Activated naive CD4-positive, alpha-beta T cell treated with anti-CD3 and anti-CD28 coated beads for 36 hours (primary cell): ENCODE measurements at regions of chr4 and their contacts with region 1.

Region 1: GRCh38 chr4:159446266-159446976 is 343.5 kb downstream of the RAPGEF2 start:
- DNase-seq: peak; percentile 42
- H3K4me3 Mint-ChIP-seq: no peak overlapping the region
- H3K27ac Mint-ChIP-seq: no peak overlapping the region
- H3K4me1 Mint-ChIP-seq: no peaks in the 10 kb centered on the region
- H3K27me3 Mint-ChIP-seq: peaks cover 17% of the 10 kb centered on the region

Region 2: DNA sequence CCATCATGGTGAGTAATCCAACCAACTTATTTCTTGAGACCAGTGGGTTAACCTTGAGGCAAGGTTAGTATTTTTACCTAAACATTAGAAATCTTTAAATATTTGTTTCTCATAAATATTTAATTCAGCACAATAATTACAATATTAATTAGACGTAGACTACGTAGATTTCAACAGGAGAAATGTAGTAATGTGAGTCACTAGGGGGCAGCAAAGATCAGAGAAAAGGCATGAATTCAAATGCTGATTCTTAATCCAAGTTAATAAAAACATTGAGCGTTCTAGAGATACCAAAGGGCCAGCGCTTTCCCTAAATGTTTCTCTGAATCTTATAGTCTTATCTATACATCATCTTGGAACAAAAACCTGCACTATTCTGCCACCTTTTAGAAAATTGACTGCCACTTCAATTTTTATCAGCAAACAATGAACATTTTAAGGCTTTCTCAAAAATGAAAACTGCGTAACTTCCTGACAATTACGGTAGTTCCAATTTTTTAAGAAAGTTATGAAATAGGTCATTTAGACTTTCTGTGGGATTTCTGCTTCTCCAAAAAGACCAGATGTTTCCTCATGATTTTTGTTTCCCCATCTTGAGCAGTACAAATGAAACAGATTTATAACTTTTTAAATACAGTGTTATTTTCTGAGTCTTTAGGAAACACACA is 1454.2 kb before region 1 on chr4:
- CTCF ChIA-PET with region 1: no interaction called
- intact Hi-C with region 1: loop called (anchors 5 kb)
- DNase-seq: peak; percentile 32
- H3K4me3 Mint-ChIP-seq: no peak overlapping the region
- H3K27ac Mint-ChIP-seq: no peak overlapping the region
- H3K4me1 Mint-ChIP-seq: no peaks in the 10 kb centered on the region
- H3K27me3 Mint-ChIP-seq: no peaks in the 10 kb centered on the region

Region 3: DNA sequence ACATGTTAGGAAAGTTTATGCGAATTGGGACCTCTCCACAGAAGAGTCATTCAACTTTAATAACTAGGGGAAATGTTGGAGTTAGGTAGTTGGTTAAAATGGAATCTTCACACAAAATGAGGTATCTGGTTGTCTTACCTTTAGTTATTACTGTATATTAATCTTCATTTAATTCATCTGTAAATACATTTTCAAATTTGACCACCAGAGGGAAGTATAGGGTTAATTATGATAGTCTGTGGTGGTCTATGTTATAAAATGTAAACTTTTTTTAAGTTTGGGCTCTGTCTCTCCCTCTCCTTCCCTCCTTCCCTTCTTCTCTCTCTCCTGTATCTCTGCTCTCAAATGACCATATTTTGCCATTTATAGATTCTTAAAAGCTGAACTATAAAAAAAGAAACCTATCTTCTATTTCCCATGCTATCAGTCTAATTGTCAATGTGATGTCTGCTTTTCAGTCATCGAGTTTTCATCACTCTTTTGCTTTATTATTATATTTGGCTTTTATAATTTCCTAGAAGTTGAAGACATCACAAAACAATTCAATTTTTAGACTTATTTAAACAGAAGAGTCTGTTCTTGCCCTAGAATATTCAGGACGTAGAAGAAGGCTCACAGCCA is 1186.4 kb before region 1 on chr4:
- CTCF ChIA-PET with region 1: interaction called, 3 read pairs
- intact Hi-C with region 1: loop called (anchors 1 kb)
- DNase-seq: no peak
- H3K4me3 Mint-ChIP-seq: no peak overlapping the region
- H3K27ac Mint-ChIP-seq: no peak overlapping the region
- H3K4me1 Mint-ChIP-seq: no peaks in the 10 kb centered on the region
- H3K27me3 Mint-ChIP-seq: no peaks in the 10 kb centered on the region

Region 4: GRCh38 chr4:158496030-158496741 is 950.2 kb before region 1 on chr4:
- CTCF ChIA-PET with region 1: no interaction called
- intact Hi-C with region 1: loop called (anchors 10 kb)
- DNase-seq: peak; percentile 71
- H3K4me3 Mint-ChIP-seq: no peak overlapping the region
- H3K27ac Mint-ChIP-seq: no peak overlapping the region
- H3K4me1 Mint-ChIP-seq: no peaks in the 10 kb centered on the region
- H3K27me3 Mint-ChIP-seq: peaks cover 11% of the 10 kb centered on the region

Region 5: DNA sequence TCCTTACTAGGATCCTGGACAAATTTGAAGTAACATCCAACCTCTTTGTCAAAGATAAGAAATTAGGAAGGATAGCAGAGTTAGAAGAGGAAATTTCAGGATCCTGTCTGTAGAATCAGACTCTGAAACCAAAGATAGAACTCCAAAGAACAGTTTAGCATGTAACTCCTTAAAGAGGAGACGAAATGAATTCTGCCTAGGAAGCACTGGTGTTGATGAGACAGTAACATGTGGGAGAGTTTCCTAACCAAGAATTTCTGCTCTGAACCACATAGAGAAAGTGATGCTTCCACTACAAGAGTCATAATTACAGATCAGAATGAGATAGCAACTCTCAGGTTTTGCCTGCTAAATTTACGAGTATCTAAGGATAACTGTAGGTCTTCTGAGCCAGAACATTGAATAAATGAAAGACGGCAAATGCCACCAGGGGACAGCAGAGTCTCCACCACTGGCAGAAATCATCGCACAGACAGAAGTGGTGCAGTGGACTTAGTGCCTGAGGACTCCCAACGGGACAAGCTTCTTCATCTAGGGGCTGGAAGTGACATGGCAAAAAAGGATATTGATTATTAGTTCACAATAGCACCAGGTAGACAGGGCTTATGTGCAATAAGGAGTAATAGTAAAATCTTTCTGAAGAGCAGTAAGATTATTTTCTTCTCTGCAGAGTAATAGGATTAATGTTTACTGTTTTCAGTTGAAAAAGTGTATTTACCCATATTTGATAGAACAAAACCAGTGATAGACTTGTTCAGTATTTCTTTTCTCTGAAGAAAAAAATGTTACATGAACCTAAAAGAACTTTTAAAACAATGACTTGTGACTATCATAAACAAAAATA is 716.5 kb before region 1 on chr4:
- CTCF ChIA-PET with region 1: no interaction called
- intact Hi-C with region 1: loop called (anchors 1 kb)
- DNase-seq: peak; percentile 73
- H3K4me3 Mint-ChIP-seq: no peak overlapping the region
- H3K27ac Mint-ChIP-seq: no peak overlapping the region
- H3K4me1 Mint-ChIP-seq: peaks cover 4% of the 10 kb centered on the region
- H3K27me3 Mint-ChIP-seq: peaks cover 26% of the 10 kb centered on the region

Region 6: DNA sequence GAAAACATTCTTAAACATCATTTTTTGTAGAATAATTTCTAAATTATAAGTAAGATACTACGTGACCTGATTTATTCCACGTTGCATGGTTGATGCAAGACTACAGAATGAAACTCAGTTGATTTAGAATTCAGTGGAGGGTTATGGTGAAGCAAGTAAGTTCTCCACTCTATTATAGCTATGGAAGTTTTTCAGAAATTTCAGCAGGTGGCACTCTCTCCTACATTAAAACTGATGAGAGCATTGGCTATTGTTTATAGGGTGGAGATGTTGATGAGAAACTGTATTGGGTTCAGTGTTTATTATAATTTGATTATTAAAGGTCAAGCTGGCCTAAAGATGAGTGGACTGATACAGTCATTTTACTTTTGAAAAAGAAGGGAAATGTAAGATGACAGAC is 589.6 kb before region 1 on chr4:
- CTCF ChIA-PET with region 1: interaction called, 5 read pairs
- intact Hi-C with region 1: loop called (anchors 1 kb)
- DNase-seq: no peak
- H3K4me3 Mint-ChIP-seq: no peak overlapping the region
- H3K27ac Mint-ChIP-seq: no peak overlapping the region
- H3K4me1 Mint-ChIP-seq: no peaks in the 10 kb centered on the region
- H3K27me3 Mint-ChIP-seq: no peaks in the 10 kb centered on the region

Region 7: DNA sequence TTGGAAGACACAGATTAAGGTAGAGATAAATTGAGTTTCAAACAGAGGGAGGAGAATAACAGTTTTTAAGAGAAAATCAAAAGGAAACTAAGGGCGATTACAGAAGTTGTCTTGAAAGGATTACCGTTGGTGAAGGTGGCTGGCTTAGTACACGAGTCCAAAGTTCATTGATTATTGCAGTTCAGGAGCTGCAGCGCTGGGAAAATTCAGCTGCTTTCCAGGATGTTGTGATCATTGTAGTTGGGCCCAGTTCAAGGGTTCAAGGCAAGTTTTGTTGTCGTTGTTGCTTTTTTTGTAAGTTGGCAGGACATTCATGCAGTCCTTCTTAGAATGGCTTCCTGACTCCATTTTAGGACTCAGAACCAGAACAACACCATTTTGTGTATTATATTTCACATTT is 118.2 kb after region 1 on chr4:
- CTCF ChIA-PET with region 1: no interaction called
- intact Hi-C with region 1: no loop called
- DNase-seq: no peak
- H3K4me3 Mint-ChIP-seq: no peak overlapping the region
- H3K27ac Mint-ChIP-seq: no peak overlapping the region
- H3K4me1 Mint-ChIP-seq: no peaks in the 10 kb centered on the region
- H3K27me3 Mint-ChIP-seq: no peaks in the 10 kb centered on the region